ENCODE measurements at regions of chr4 and their contacts with region 1.

Region 1: GRCh38 chr4:183504064-183504929 is 561 bp upstream of the ING2 start:
- DNase-seq: peak; percentile 96 to 97 (median 96)
- H3K4me3 ChIP-seq: peak overlapping the region; percentile 90 to 96 (median 93)
- H3K4me3 Mint-ChIP-seq: peak overlapping the region; percentile 88 to 92
- H3K27ac ChIP-seq: peak overlapping the region; percentile 79 to 96
- H3K27ac Mint-ChIP-seq: peak overlapping the region; percentile 79 to 97 (median 91)
- H3K4me1 ChIP-seq: peaks cover 10 to 23% of the 10 kb centered on the region in 2 donors
- H3K4me1 Mint-ChIP-seq: peaks cover 21% of the 10 kb centered on the region
- H3K27me3 ChIP-seq: no peaks in the 10 kb centered on the region
- H3K27me3 Mint-ChIP-seq: peaks cover 0 to 3% (median 0%) of the 10 kb centered on the region in 3 donors
- CTCF ChIP-seq: peak; percentile 12

Region 2: GRCh38 chr4:183106839-183107238 is 397.5 kb before region 1 on chr4:
- intact Hi-C with region 1: no loop called
- DNase-seq: no peak
- H3K4me3 ChIP-seq: no peak overlapping the region
- H3K4me3 Mint-ChIP-seq: peak overlapping the region in 1 of 2 donors; percentile 33
- H3K27ac ChIP-seq: no peak overlapping the region
- H3K27ac Mint-ChIP-seq: no peak overlapping the region
- H3K4me1 ChIP-seq: no peaks in the 10 kb centered on the region
- H3K4me1 Mint-ChIP-seq: no peaks in the 10 kb centered on the region
- H3K27me3 ChIP-seq: peaks cover 0 to 10% of the 10 kb centered on the region in 2 donors
- H3K27me3 Mint-ChIP-seq: peaks cover 5 to 14% (median 12%) of the 10 kb centered on the region in 3 donors
- CTCF ChIP-seq: no peak

Region 3: DNA sequence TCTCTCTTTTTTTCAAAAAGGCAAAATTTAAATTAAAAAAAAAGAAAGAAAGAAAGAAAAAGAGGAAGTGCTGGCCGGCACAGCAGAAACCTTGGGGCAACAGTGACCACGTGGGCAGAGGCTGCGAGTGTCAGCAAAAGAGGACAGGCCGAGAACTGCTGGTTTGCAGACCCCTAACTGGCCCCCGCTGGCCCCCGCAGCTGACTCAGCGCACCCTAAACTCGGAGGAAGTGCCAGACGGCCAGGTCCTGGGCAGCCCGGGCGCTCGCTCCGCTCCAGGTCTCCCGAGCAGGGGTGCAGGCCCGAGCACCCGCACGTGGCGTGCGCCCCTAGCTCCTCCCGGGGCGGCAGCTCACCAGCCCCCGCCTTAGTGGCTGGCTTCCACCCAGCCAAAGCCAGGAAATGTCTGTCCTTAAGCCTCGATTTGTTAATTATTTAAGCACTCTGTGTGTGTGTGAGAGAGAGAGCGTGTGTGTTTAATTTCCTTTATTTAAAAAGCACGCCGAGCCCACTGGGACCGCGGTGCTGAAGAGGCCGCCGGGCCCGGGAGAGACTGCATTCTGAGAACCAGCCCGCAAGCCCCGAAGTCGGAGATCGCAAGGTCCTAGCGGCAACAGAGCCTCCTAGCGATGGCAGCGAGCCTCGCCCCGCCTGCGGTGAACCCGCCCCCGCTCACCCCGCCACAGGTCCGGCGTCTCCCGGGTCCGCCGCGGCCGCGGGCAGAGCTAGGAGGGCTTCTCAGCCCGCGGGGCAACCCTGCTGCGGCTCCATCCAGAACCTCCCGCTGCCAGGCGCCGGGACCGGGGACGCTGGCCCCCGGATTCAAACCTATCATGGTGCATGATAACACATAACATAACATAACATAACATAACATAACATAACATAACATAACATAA is 105.8 kb before region 1 on chr4:
- intact Hi-C with region 1: loop called in 1 of 2 experiments (anchors 5 kb)
- DNase-seq: peak; percentile 60 to 75 (median 69)
- H3K4me3 ChIP-seq: peak overlapping the region; percentile 39 to 78 (median 48)
- H3K4me3 Mint-ChIP-seq: peak overlapping the region; percentile 90 to 95
- H3K27ac ChIP-seq: peak overlapping the region; percentile 66 to 82
- H3K27ac Mint-ChIP-seq: peak overlapping the region; percentile 73 to 95 (median 89)
- H3K4me1 ChIP-seq: peaks cover 48 to 62% of the 10 kb centered on the region in 2 donors
- H3K4me1 Mint-ChIP-seq: peaks cover 57% of the 10 kb centered on the region
- H3K27me3 ChIP-seq: no peaks in the 10 kb centered on the region
- H3K27me3 Mint-ChIP-seq: peaks cover 3 to 12% (median 9%) of the 10 kb centered on the region in 3 donors
- CTCF ChIP-seq: peak; percentile 54

Region 4: GRCh38 chr4:183571350-183571941 is 67.1 kb after region 1 on chr4:
- intact Hi-C with region 1: no loop called
- DNase-seq: no peak
- H3K4me3 ChIP-seq: no peak overlapping the region
- H3K4me3 Mint-ChIP-seq: no peak overlapping the region
- H3K27ac ChIP-seq: no peak overlapping the region
- H3K27ac Mint-ChIP-seq: no peak overlapping the region
- H3K4me1 ChIP-seq: no peaks in the 10 kb centered on the region
- H3K4me1 Mint-ChIP-seq: no peaks in the 10 kb centered on the region
- H3K27me3 ChIP-seq: no peaks in the 10 kb centered on the region
- H3K27me3 Mint-ChIP-seq: peaks cover 0 to 3% (median under 1%) of the 10 kb centered on the region in 3 donors
- CTCF ChIP-seq: no peak

Region 5: GRCh38 chr4:183659029-183659871 is 155.0 kb after region 1 on chr4 and contains the starts of genes RWDD4 and TRAPPC11:
- intact Hi-C with region 1: loop called (anchors 2 to 5 kb)
- DNase-seq: peak; percentile 96 to 97 (median 97)
- H3K4me3 ChIP-seq: peak within 1 kb of the TSS; percentile 82 to 98 (median 86)
- H3K4me3 Mint-ChIP-seq: peak within 1 kb of the TSS; percentile 96 to 97
- H3K27ac ChIP-seq: peak within 1 kb of the TSS; percentile 85 to 94
- H3K27ac Mint-ChIP-seq: peak within 1 kb of the TSS; percentile 96 to 99 (median 98)
- H3K4me1 ChIP-seq: peaks cover 22 to 33% of the 10 kb centered on the region in 2 donors
- H3K4me1 Mint-ChIP-seq: peaks cover 31% of the 10 kb centered on the region
- H3K27me3 ChIP-seq: no peaks in the 10 kb centered on the region
- H3K27me3 Mint-ChIP-seq: no peaks in the 10 kb centered on the region
- CTCF ChIP-seq: peak; percentile 19
- polyA plus RNA-seq, gene RWDD4: 4.4 to 21.2 (median 16.5) TPM
- polyA plus RNA-seq, gene TRAPPC11: 18.4 to 30.7 (median 29.7) TPM

Region 6: GRCh38 chr4:184649026-184649970 is 1145.0 kb after region 1 on chr4 and contains the starts of genes CASP3 and PRIMPOL:
- intact Hi-C with region 1: loop called in 1 of 2 experiments (anchors 10 kb)
- DNase-seq: peak; percentile 91
- H3K4me3 ChIP-seq: peak within 1 kb of the TSS; percentile 89 to 91 (median 89)
- H3K4me3 Mint-ChIP-seq: peak within 1 kb of the TSS; percentile 89 to 94
- H3K27ac ChIP-seq: peak within 1 kb of the TSS; percentile 72 to 88
- H3K27ac Mint-ChIP-seq: peak within 1 kb of the TSS; percentile 89 to 94 (median 91)
- H3K4me1 ChIP-seq: peaks cover 21 to 41% of the 10 kb centered on the region in 2 donors
- H3K4me1 Mint-ChIP-seq: peaks cover 50% of the 10 kb centered on the region
- H3K27me3 ChIP-seq: no peaks in the 10 kb centered on the region
- H3K27me3 Mint-ChIP-seq: peaks cover 0 to 1% (median 0%) of the 10 kb centered on the region in 3 donors
- CTCF ChIP-seq: no peak
- polyA plus RNA-seq, gene CASP3: 6.7 to 11.3 (median 11.1) TPM
- polyA plus RNA-seq, gene PRIMPOL: 7.0 to 10.5 (median 10.0) TPM

Measured in CD14-positive monocyte (primary cell).